Lower leg skin (tissue), 4 donors: ENCODE measurements at regions of chr13 and their contacts with region 1.

Region 1: GRCh38 chr13:73107481-73107880 is 48.7 kb downstream of the KLF5 start:
- DNase-seq: no peak
- H3K4me3 ChIP-seq: no peak overlapping the region
- CTCF ChIP-seq: no peak
- POLR2A ChIP-seq: no peak

Region 2: GRCh38 chr13:73158851-73159250 is 51.4 kb after region 1 on chr13:
- intact Hi-C with region 1: loop called (anchors 2 kb)
- DNase-seq: no peak
- H3K4me3 ChIP-seq: no peak overlapping the region
- CTCF ChIP-seq: no peak
- POLR2A ChIP-seq: no peak